ENCODE measurements at regions of chr15 and their contacts with region 1.

Region 1: DNA sequence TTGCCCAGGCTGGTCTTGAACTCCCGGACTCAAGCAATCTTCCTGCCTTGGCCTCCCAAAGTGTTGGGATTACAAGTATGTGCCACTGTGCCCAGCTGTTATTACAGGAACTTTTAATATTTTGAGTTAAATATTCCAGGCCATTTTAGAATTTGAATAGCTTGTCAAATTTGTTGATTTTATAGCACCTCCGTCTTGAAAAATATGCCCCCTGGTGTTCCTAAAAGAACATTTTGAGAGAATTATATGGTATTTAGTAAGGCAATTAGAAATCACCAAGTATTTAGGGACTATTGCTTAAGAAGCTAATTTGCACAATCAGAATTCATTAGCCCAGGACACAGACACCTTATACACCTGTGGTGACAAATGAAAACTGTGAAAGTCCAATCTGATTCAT is 23.7 kb downstream of the PDE8A start:
- DNase-seq: no peak
- H3K4me3 ChIP-seq: no peak overlapping the region
- H3K4me3 Mint-ChIP-seq: no peak overlapping the region
- H3K27ac ChIP-seq: peak overlapping the region in 1 of 2 donors; percentile 4
- H3K27ac Mint-ChIP-seq: peak overlapping the region in 6 of 7 donors; percentile 20 to 94 (median 53)
- H3K4me1 ChIP-seq: peaks cover 55 to 64% of the 10 kb centered on the region in 2 donors
- H3K4me1 Mint-ChIP-seq: peaks cover 74% of the 10 kb centered on the region
- H3K27me3 ChIP-seq: no peaks in the 10 kb centered on the region
- H3K27me3 Mint-ChIP-seq: peaks cover 0 to 3% (median 0%) of the 10 kb centered on the region in 3 donors
- CTCF ChIP-seq: no peak

Region 2: GRCh38 chr15:84955089-84955848 is 50.0 kb before region 1 on chr15:
- intact Hi-C with region 1: loop called in 1 of 2 experiments (anchors 10 kb)
- DNase-seq: peak; percentile 42 to 59 (median 53)
- H3K4me3 ChIP-seq: peak overlapping the region in 1 of 3 experiments; percentile 63
- H3K4me3 Mint-ChIP-seq: peak overlapping the region; percentile 52 to 58
- H3K27ac ChIP-seq: no peak overlapping the region
- H3K27ac Mint-ChIP-seq: no peak overlapping the region
- H3K4me1 ChIP-seq: peaks cover 15 to 23% of the 10 kb centered on the region in 2 donors
- H3K4me1 Mint-ChIP-seq: peaks cover 21% of the 10 kb centered on the region
- H3K27me3 ChIP-seq: no peaks in the 10 kb centered on the region
- H3K27me3 Mint-ChIP-seq: peaks cover 0 to 10% (median 3%) of the 10 kb centered on the region in 3 donors
- CTCF ChIP-seq: peak; percentile 74

Region 3: GRCh38 chr15:84992157-84992944 is 13.0 kb before region 1 on chr15:
- intact Hi-C with region 1: no loop called
- DNase-seq: peak in 1 of 3 donors; percentile 76
- H3K4me3 ChIP-seq: no peak overlapping the region
- H3K4me3 Mint-ChIP-seq: no peak overlapping the region
- H3K27ac ChIP-seq: no peak overlapping the region
- H3K27ac Mint-ChIP-seq: peak overlapping the region in 3 of 7 donors; percentile 2 to 61 (median 28)
- H3K4me1 ChIP-seq: peaks cover 20 to 45% of the 10 kb centered on the region in 2 donors
- H3K4me1 Mint-ChIP-seq: peaks cover 44% of the 10 kb centered on the region
- H3K27me3 ChIP-seq: no peaks in the 10 kb centered on the region
- H3K27me3 Mint-ChIP-seq: no peaks in the 10 kb centered on the region
- CTCF ChIP-seq: no peak